ENCODE measurements at regions of chr3 and their contacts with region 1.

Region 1: GRCh38 chr3:141452036-141452435 is 34.8 kb upstream of the RASA2 start:
- DNase-seq: peak in 1 of 2 donors; percentile 80
- ATAC-seq: peak; percentile 55 to 65 (median 61)
- H3K4me3 ChIP-seq: no peak overlapping the region
- H3K4me3 Mint-ChIP-seq: no peak overlapping the region
- H3K27ac ChIP-seq: peak overlapping the region; percentile 15
- H3K27ac Mint-ChIP-seq: no peak overlapping the region
- H3K4me1 ChIP-seq: peaks cover 6% of the 10 kb centered on the region
- H3K4me1 Mint-ChIP-seq: peaks cover 10 to 11% of the 10 kb centered on the region in 2 donors
- H3K27me3 ChIP-seq: no peaks in the 10 kb centered on the region
- H3K27me3 Mint-ChIP-seq: no peaks in the 10 kb centered on the region
- CTCF ChIP-seq: peak; percentile 28

Region 2: DNA sequence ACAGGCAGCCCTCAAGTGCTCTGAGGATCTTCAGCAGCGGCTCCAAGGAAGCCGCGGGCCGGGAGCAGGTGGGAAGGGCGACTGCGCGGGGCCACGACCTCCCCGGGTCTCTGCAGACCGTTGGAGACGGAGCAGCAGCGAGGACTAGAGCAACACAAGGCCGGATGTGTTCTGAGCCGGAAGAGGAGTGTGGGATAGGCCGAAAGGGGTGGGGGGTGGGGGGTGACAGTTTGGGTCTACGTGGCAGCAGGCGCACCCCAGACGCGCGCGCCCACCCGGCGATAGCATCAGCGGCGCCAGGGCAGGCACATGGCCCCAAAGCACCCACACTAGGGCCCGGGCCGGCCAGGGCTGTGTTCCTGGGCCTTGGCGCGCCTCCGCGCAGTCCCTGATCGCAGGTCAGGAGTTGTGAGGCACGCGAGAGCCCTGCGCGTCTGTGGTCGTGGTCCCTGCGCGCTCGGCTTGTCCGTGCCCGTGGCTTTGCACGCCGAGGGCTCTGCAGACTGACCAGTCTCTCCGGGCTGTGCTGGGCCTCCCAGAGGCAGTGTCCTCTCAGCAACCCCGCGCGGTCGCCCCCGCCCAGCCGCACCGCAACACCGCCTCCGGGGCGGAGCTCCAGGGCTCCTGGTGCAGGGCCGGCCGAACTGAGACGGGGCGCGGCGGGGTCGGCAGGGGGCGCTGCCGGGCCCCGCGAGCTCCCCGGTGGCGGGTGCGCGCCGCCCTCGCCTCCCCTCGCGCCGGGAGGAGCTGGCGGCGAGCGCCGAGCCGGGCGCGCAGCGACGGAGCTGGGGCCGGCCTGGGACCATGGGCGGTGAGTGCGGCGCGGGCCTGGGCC is 220.7 kb before region 1 on chr3 and contains the start of gene PXYLP1:
- intact Hi-C with region 1: loop called (anchors 10 kb)
- DNase-seq: peak; percentile 93 to 95
- ATAC-seq: peak; percentile 92 to 98 (median 95)
- H3K4me3 ChIP-seq: peak within 1 kb of the TSS; percentile 80
- H3K4me3 Mint-ChIP-seq: peak within 1 kb of the TSS; percentile 98
- H3K27ac ChIP-seq: peak within 1 kb of the TSS; percentile 69
- H3K27ac Mint-ChIP-seq: peak within 1 kb of the TSS; percentile 92 to 97
- H3K4me1 ChIP-seq: peaks cover 43% of the 10 kb centered on the region
- H3K4me1 Mint-ChIP-seq: peaks cover 58 to 61% of the 10 kb centered on the region in 2 donors
- H3K27me3 ChIP-seq: no peaks in the 10 kb centered on the region
- H3K27me3 Mint-ChIP-seq: no peaks in the 10 kb centered on the region
- CTCF ChIP-seq: peak; percentile 69
- total RNA-seq, gene PXYLP1: 13.0 to 32.4 (median 21.7) TPM

Region 3: DNA sequence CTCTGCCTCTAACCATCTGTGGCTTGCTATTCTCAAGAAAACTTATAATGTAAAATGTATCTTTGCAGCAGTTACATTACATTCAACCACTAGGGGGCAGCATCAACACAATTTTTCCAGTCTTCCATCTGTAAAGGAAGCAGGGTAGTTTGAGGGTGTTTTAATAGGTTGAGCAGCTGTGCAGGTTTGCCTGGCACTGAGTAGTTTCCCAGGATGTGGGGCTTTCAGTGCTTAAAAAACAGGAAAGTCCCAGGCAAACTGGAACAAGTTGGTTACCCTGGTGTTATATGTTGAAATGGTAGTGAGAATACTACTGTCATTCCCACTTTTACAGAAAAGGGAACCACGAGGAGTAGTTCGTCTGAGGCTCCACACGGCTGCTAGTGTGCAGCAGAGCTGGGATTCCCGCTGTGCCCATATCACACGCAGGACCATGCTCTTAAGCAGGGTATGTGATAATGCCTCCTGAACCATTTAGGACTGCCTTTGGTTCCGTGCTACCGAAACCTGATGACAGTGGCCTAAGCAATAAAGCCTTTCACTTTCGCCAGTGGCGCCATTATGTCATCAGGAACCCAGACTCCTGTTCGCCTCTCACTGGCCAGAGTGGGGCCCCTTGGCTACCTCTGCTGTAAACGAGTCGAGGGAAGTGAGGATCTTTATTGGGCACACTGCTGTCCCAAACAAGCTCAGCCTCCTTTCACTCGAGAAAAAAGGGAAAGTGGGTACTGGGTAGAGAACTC is 148.4 kb before region 1 on chr3:
- intact Hi-C with region 1: loop called (anchors 1 kb)
- DNase-seq: peak in 1 of 2 donors; percentile 89
- ATAC-seq: peak; percentile 84 to 91 (median 85)
- H3K4me3 ChIP-seq: no peak overlapping the region
- H3K4me3 Mint-ChIP-seq: no peak overlapping the region
- H3K27ac ChIP-seq: no peak overlapping the region
- H3K27ac Mint-ChIP-seq: no peak overlapping the region
- H3K4me1 ChIP-seq: peaks cover 3% of the 10 kb centered on the region
- H3K4me1 Mint-ChIP-seq: peaks cover 0 to 4% of the 10 kb centered on the region in 2 donors
- H3K27me3 ChIP-seq: no peaks in the 10 kb centered on the region
- H3K27me3 Mint-ChIP-seq: no peaks in the 10 kb centered on the region
- CTCF ChIP-seq: peak; percentile 91

Region 4: DNA sequence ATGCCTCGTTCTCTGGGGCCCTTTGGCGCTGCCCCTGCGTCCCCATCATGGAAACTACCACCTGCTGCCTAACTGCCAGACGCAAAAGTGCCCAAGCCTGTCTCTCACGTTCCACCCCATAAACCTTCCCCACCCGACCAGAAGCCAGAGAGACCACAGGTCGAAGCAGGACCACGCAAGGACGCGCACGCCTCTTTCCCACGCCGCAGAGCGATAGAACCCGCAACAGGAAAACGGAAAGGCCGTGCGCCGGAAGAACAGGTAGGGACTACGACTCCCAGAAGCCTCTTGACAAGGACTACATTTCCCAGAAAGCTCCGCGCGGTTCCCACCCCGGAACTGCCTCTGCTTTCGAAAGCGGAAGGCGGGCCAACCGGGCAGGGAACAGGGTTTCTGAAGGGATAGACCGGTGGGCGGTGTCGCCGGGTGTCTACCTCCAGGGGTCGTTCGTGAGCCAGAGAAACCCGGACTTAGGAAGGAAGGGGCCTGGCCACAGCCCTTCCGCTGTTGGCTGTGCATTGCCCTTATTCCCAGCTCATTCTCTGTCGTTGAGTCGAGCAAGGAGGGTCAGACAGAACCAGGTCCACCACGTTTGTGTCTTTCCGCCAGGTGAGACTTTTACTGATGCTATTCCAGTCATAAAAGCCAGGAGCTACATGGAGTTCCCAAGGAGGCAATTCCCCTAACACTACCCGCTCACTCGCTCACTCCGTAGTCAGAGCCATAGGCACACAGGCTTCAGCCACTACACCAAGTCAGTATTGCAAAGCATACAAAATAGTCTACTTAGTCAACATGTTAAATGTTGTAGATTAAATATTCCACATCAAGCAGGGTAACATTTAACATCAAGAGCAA is 140.3 kb before region 1 on chr3:
- intact Hi-C with region 1: loop called (anchors 2 kb)
- DNase-seq: peak; percentile 93 to 98
- ATAC-seq: peak; percentile 96 to 99 (median 98)
- H3K4me3 ChIP-seq: peak overlapping the region; percentile 64
- H3K4me3 Mint-ChIP-seq: peak overlapping the region; percentile 100
- H3K27ac ChIP-seq: peak overlapping the region; percentile 81
- H3K27ac Mint-ChIP-seq: peak overlapping the region; percentile 96 to 98
- H3K4me1 ChIP-seq: peaks cover 20% of the 10 kb centered on the region
- H3K4me1 Mint-ChIP-seq: peaks cover 30 to 31% of the 10 kb centered on the region in 2 donors
- H3K27me3 ChIP-seq: no peaks in the 10 kb centered on the region
- H3K27me3 Mint-ChIP-seq: no peaks in the 10 kb centered on the region
- CTCF ChIP-seq: peak; percentile 48

Region 5: GRCh38 chr3:141360888-141361598 is 91.0 kb before region 1 on chr3:
- intact Hi-C with region 1: loop called (anchors 1 kb)
- DNase-seq: peak in 1 of 2 donors; percentile 73
- ATAC-seq: peak; percentile 62 to 67 (median 65)
- H3K4me3 ChIP-seq: no peak overlapping the region
- H3K4me3 Mint-ChIP-seq: no peak overlapping the region
- H3K27ac ChIP-seq: no peak overlapping the region
- H3K27ac Mint-ChIP-seq: no peak overlapping the region
- H3K4me1 ChIP-seq: peaks cover 5% of the 10 kb centered on the region
- H3K4me1 Mint-ChIP-seq: peaks cover 10% of the 10 kb centered on the region in 2 donors
- H3K27me3 ChIP-seq: no peaks in the 10 kb centered on the region
- H3K27me3 Mint-ChIP-seq: peaks cover 12 to 16% of the 10 kb centered on the region in 2 donors
- CTCF ChIP-seq: peak; percentile 56